ENCODE measurements at regions of chr1 and their contacts with region 1.

Region 1: DNA sequence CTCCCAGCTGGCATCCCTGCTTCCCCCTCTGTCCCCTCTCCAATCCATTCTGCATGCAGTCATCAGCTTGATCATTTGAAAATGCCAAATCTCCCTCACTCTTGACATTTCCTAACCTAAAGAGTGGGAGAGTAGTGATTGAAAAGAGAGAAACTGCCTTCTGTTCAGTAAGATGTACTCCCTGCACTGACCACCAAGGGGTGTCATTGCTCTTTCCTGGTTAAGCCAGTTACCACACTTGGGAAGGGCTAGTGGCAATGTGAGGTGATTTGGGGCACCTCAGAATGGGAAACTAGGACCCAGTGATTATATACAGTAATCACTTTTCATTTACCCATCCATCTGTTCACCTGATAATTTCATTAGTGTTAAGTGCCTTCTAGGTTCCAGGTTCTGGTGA is 6.9 kb upstream of the TMEM269 start:
- DNase-seq: peak; percentile 12
- H3K4me3 Mint-ChIP-seq: no peak overlapping the region
- H3K27ac Mint-ChIP-seq: no peak overlapping the region
- H3K4me1 Mint-ChIP-seq: peaks cover 30% of the 10 kb centered on the region
- H3K27me3 Mint-ChIP-seq: no peaks in the 10 kb centered on the region

Region 2: DNA sequence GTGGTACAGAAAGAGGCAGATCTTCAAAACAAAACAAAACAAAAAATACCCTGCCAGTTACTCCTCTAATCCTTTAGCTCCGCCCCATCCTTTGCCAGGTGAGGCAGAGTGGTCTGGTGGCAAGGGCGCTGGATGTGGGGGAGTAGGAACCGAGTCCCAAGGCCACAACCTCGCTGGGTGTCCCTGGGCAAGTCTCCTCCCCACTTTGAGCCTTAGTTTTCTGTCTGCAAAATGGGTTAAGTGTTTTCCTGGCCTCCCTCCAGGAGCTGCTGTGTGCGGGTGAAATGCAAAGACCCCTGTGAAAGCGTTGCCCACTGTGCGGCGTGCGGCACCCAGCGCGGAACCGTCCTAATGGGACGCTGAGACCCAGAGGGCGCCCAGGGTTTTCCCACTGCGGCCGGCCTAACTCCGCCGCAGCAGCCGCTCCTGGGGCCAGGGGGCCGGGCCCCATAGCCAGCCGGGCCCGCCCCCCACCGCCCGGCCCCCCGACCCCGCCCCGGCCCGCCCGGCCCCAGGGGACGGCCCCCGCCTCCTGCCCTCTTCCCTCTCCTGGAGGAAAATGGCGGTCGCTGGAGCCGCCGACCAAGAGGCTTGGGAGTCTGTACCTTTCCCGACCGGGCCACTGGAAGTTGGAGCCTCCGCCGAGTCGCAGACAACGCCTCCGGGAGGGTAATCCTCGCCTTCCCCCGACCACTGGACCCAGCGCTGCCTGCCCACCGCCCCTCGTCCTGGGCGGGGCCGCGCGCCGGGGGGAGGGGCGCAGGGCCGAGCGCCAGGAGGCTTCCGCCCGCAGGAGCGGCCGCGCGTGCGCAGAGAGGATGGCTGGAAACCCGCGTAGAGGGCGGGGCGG is 39.0 kb after region 1 on chr1 and contains the starts of genes ERMAP and SVBP:
- intact Hi-C with region 1: loop called (anchors 1 kb)
- DNase-seq: peak; percentile 90
- H3K4me3 Mint-ChIP-seq: peak within 1 kb of the TSS; percentile 79
- H3K27ac Mint-ChIP-seq: peak within 1 kb of the TSS; percentile 80
- H3K4me1 Mint-ChIP-seq: peaks cover 19% of the 10 kb centered on the region
- H3K27me3 Mint-ChIP-seq: no peaks in the 10 kb centered on the region
- total RNA-seq, gene ERMAP: 3.4 and 3.7 TPM in 2 replicates
- total RNA-seq, gene SVBP: 6.4 and 8.2 TPM in 2 replicates

Region 3: DNA sequence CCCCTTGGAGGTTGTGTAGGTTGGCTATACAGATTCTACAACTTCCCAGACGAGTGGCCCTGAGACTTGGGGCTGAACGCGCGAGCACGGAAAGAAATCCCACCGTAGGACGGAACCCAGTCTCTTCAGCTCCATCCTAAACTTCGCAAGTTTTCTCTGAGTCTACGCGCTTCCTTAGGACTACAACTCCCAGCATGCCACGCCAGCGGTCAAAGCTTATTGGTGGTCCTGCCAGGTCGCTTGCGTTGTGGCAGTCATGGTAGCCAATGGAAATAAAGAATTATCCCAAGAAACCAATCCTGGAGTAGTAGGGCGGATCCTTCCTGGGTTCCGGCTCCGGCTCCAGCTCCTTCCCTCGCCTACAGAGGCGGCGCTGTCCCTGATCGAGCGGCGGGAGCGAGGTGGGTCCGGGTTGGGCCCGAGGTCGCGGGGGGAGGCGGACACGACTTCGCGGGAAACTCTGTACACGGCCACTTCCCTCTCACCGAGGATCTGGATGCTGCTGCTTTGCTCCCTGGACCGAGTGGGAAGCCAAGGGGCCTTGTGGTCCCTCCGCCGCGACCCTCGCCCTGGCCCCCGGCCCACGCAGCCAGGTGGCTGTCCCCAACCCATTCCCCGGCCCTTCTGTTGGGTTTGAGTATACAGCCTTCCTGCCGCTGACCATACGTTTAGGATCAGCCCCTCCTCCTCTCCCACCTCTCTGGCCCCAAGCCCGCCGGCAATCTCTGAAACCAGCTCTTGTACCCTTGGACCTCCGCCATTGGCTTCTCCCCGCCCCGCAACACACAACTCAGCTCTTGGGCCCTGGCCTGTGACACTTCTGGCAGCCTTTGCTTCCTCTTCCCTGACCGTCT is 68.6 kb after region 1 on chr1 and contains the start of gene ZNF691:
- intact Hi-C with region 1: loop called (anchors 2 kb)
- DNase-seq: peak; percentile 86
- H3K4me3 Mint-ChIP-seq: peak within 1 kb of the TSS; percentile 97
- H3K27ac Mint-ChIP-seq: peak within 1 kb of the TSS; percentile 78
- H3K4me1 Mint-ChIP-seq: peaks cover 41% of the 10 kb centered on the region
- H3K27me3 Mint-ChIP-seq: no peaks in the 10 kb centered on the region
- total RNA-seq, gene ZNF691: 10.0 and 12.9 TPM in 2 replicates

Region 4: DNA sequence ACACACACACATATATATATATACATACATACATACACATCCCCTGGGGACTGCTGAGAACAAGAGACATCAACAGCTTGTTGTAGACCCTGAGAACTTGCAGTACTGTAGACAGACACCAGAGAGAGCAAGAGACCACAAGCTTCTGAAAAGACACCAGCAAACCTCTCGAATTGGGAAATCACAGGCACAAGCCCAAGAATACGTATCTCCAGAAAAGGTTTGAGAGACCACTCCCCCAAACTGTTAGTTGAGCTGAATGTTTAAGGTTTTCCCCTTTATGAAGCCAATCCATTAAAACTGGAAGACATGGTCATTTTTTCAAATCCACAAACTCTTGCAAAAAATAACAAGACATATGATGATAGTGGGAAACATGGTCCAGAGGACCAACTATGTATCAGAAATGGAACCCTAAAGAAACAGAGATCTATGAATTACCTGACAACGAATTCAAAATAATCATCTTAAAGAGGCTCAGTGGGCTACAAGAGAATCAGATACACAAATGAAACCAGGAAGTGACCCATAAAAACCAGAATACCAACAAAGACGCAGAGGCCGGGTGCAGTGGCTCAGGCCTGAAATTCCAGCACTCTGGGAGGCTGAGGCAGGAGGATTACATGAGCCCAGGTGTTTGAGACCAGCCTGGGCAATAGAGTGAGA is 135.7 kb after region 1 on chr1:
- intact Hi-C with region 1: loop called (anchors 2 kb)
- DNase-seq: peak; percentile 49
- H3K4me3 Mint-ChIP-seq: no peak overlapping the region
- H3K27ac Mint-ChIP-seq: no peak overlapping the region
- H3K4me1 Mint-ChIP-seq: peaks cover 7% of the 10 kb centered on the region
- H3K27me3 Mint-ChIP-seq: peaks cover 4% of the 10 kb centered on the region

Region 5: DNA sequence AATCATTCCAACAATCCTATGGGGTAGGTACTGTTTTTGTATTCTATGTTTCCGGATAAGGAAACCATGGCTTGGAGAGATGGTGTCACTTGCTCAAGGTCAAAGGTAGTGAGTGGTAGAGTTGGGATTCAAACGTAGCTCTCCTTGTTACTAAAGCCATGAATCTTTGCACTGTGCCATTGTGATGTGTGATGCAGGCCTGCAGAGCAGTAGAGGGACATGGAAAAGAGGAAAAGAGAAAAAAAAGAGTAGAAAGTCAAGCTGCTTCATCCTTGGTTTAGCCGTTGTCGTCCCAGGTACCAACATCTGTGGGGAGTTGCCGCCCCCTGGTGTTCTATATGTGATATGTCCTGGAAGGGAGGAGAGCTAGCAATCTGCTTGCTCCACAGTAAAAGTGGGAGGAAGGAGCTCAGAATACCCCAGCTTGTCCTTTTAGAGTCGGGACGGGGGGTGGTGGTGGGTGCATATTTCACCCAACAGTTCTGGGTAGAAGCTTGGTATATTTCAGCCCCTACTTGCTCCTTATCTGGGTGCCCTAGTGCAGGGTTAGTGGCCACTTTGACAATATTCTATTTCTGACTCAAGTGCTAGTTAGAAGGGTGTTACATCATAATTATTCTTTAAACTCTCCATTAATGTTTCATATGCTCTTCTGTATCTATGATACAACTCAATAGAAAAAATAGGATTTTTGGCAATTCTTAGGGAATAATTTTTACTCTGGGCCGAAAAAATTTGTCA is 295.8 kb after region 1 on chr1:
- intact Hi-C with region 1: loop called (anchors 1 kb)
- DNase-seq: peak; percentile 58
- H3K4me3 Mint-ChIP-seq: no peak overlapping the region
- H3K27ac Mint-ChIP-seq: no peak overlapping the region
- H3K4me1 Mint-ChIP-seq: peaks cover 6% of the 10 kb centered on the region
- H3K27me3 Mint-ChIP-seq: peaks cover 4% of the 10 kb centered on the region